CD4-positive, alpha-beta T cell (primary cell): ENCODE measurements at regions of chr13 and their contacts with region 1.

Region 1: GRCh38 chr13:95181586-95181985 is 119.7 kb downstream of the ABCC4 start:
- DNase-seq: no peak
- ATAC-seq: no peak
- H3K4me3 ChIP-seq: no peak overlapping the region
- H3K4me3 Mint-ChIP-seq: no peak overlapping the region
- H3K27ac ChIP-seq: no peak overlapping the region
- H3K27ac Mint-ChIP-seq: peak overlapping the region; percentile 93
- H3K4me1 ChIP-seq: peaks cover 52% of the 10 kb centered on the region
- H3K4me1 Mint-ChIP-seq: peaks cover 91% of the 10 kb centered on the region
- H3K27me3 ChIP-seq: no peaks in the 10 kb centered on the region
- H3K27me3 Mint-ChIP-seq: no peaks in the 10 kb centered on the region
- CTCF ChIP-seq: no peak

Region 2: GRCh38 chr13:94601446-94602431 is 579.8 kb before region 1 on chr13 and contains the start of gene GPR180:
- CTCF ChIA-PET with region 1: no interaction called
- POLR2A ChIA-PET with region 1: no interaction called
- intact Hi-C with region 1: loop called in 1 of 2 experiments (anchors 10 kb)
- DNase-seq: peak; percentile 72 to 98 (median 84)
- ATAC-seq: peak; percentile 98
- H3K4me3 ChIP-seq: peak within 1 kb of the TSS; percentile 76
- H3K4me3 Mint-ChIP-seq: peak within 1 kb of the TSS; percentile 87
- H3K27ac ChIP-seq: peak within 1 kb of the TSS; percentile 59 to 61
- H3K27ac Mint-ChIP-seq: peak within 1 kb of the TSS; percentile 75
- H3K4me1 ChIP-seq: peaks cover 17% of the 10 kb centered on the region
- H3K4me1 Mint-ChIP-seq: peaks cover 31% of the 10 kb centered on the region
- H3K27me3 ChIP-seq: no peaks in the 10 kb centered on the region
- H3K27me3 Mint-ChIP-seq: no peaks in the 10 kb centered on the region
- CTCF ChIP-seq: no peak
- total RNA-seq, gene GPR180: 0.80 to 0.92 TPM

Region 3: DNA sequence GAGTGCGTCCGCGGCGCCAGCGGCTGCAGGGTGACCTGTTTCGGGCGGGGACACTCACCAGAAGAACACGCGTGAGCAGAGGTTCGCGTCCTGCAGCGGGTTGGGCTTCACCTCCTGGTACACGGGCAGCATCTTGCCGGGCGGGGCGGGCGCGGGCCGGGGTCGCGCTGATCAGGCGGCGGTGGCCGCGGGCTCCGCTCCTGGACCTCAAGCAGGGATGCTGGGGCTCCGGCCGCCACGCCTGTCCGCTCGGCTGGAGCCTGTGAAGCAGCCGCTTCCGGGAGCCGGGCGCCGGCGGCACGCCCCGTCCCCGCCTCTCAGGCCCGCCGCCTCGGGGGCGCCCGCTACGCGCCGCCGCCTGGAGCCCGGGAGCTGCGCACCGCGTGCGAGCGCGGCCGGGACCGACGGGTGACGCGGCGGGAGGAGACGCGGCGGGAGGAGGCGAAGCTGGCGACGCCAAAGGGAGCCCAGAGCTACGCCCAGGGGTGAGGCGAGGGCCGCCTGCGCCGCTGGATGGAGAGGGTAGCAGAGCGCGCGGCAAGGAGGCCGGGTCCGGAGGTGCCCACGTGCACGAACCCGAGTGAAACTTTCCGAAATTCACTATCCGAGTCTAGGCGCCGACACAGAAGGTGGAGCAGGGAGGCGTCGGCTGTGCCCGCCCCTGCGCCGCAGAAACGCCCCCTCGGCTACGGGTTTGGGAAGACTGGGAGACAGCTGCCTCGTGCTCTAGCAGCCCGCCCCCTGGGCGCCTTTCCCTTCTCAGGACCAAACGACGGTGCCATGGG is 119.8 kb after region 1 on chr13 and contains the start of gene ABCC4:
- CTCF ChIA-PET with region 1: no interaction called
- POLR2A ChIA-PET with region 1: no interaction called
- intact Hi-C with region 1: loop called (anchors 1 to 5 kb)
- DNase-seq: peak; percentile 12 to 76 (median 43)
- ATAC-seq: peak; percentile 79
- H3K4me3 ChIP-seq: peak within 1 kb of the TSS; percentile 79
- H3K4me3 Mint-ChIP-seq: peak within 1 kb of the TSS; percentile 90
- H3K27ac ChIP-seq: no peak within 1 kb of the TSS
- H3K27ac Mint-ChIP-seq: peak within 1 kb of the TSS; percentile 21
- H3K4me1 ChIP-seq: peaks cover 21% of the 10 kb centered on the region
- H3K4me1 Mint-ChIP-seq: peaks cover 25% of the 10 kb centered on the region
- H3K27me3 ChIP-seq: no peaks in the 10 kb centered on the region
- H3K27me3 Mint-ChIP-seq: no peaks in the 10 kb centered on the region
- CTCF ChIP-seq: no peak
- total RNA-seq, gene ABCC4: 4.0 to 4.4 TPM

Region 4: DNA sequence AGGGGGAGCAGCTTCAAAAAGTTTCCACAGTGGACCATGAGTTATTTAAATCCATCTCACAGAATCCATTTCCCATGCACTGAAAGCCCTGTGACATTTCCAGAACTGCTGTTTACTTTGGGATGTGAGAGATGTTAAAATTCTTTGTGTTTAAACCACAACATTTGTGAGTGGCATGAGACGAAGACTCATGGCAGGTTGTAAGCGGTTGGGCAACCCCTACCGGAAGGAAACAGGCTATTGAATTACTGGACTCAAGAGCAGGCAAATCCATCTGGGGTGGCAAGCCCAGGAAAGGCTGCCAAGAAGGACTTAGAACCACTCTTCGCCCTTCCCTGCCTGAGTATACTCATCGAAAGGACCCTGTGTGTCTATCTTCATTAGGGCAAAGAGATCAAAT is 348.6 kb after region 1 on chr13:
- CTCF ChIA-PET with region 1: no interaction called
- POLR2A ChIA-PET with region 1: no interaction called
- intact Hi-C with region 1: no loop called
- DNase-seq: no peak
- ATAC-seq: no peak
- H3K4me3 ChIP-seq: no peak overlapping the region
- H3K4me3 Mint-ChIP-seq: no peak overlapping the region
- H3K27ac ChIP-seq: no peak overlapping the region
- H3K27ac Mint-ChIP-seq: no peak overlapping the region
- H3K4me1 ChIP-seq: no peaks in the 10 kb centered on the region
- H3K4me1 Mint-ChIP-seq: no peaks in the 10 kb centered on the region
- H3K27me3 ChIP-seq: peaks cover 0 to 15% of the 10 kb centered on the region in 2 experiments
- H3K27me3 Mint-ChIP-seq: peaks cover 41% of the 10 kb centered on the region
- CTCF ChIP-seq: no peak

Region 5: GRCh38 chr13:95684418-95684817 is 502.8 kb after region 1 on chr13:
- CTCF ChIA-PET with region 1: no interaction called
- POLR2A ChIA-PET with region 1: no interaction called
- intact Hi-C with region 1: loop called in 1 of 2 experiments (anchors 5 kb)
- DNase-seq: no peak
- ATAC-seq: no peak
- H3K4me3 ChIP-seq: no peak overlapping the region
- H3K4me3 Mint-ChIP-seq: no peak overlapping the region
- H3K27ac ChIP-seq: no peak overlapping the region
- H3K27ac Mint-ChIP-seq: no peak overlapping the region
- H3K4me1 ChIP-seq: peaks cover 14% of the 10 kb centered on the region
- H3K4me1 Mint-ChIP-seq: peaks cover 92% of the 10 kb centered on the region
- H3K27me3 ChIP-seq: no peaks in the 10 kb centered on the region
- H3K27me3 Mint-ChIP-seq: no peaks in the 10 kb centered on the region
- CTCF ChIP-seq: no peak